Natural killer cell (primary cell): ENCODE measurements at regions of chr11 and their contacts with region 1.

Region 1: DNA sequence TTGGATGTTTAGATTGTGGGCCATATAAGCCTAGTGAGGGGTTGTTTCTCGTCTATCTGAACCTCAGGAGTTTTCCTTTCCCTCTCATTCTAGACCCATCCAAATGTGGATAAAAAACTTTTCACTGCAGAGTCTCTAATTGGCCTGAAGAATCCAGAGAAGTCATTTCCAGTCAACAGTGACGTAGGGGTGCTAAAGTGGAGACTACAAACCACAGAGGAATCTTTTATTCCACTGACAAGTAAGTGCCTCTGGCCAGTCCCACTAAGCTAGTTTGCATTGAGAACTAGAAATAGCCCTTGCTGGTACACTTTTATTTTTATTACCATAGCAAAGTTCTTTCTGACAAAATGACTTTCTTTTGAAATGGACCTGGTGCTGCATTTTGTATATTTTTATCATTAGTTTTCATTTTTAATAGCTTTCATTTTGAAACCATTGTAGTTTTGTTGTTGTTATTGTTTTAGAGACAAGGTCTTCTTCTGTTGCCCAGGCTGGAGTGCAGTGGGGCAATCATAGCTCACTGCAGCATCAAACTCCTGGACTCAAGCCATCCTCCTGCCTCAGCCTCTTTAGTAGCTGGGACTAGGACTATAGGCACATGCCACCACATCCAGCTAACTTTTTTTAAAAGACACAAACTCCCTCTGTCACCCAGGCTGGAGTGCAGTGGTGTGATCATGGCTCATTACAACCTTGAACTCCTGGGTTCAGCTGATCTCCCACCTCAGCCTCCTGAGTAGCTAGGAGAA is 14.6 kb upstream of the PHLDB1 start:
- DNase-seq: no peak
- ATAC-seq: no peak
- H3K4me3 ChIP-seq: no peak overlapping the region
- H3K4me3 Mint-ChIP-seq: no peak overlapping the region
- H3K27ac ChIP-seq: no peak overlapping the region
- H3K27ac Mint-ChIP-seq: peak overlapping the region in 1 of 2 donors; percentile 19
- H3K4me1 ChIP-seq: no peaks in the 10 kb centered on the region
- H3K4me1 Mint-ChIP-seq: peaks cover 6 to 7% of the 10 kb centered on the region in 2 donors
- H3K27me3 ChIP-seq: no peaks in the 10 kb centered on the region
- H3K27me3 Mint-ChIP-seq: no peaks in the 10 kb centered on the region
- CTCF ChIP-seq: no peak

Region 2: DNA sequence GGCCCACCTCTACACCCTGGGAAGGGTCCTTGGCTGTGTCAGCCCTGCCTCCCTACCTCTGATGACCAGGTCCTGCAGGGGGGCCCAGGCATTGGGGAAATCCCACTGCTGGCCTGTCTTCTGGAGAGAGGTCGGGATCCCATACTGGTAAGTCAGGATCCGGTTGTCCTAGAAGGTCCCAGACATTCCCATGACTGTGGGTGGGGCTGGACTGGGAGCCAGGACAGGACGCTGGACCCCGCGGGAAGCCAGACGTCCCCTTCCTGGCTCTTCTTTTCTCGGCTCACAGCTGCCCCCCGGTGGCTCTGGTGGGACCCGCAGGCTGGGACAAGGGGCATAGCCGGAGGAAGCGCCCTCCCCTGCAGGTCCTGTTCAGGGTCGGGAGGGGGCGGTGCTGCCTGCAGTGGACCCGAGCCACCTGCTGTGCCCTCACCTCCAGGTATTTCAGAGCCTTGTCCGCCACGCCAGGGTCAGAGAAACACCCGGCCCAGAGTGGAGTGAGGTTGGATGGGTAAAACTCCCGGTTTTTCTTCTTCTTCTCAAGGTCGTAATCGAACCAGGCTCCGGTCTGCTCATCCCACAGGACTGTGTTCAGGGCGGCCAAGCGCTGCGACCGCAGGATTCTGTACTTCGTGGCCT is 66.6 kb after region 1 on chr11:
- intact Hi-C with region 1: loop called (anchors 1 kb)
- DNase-seq: peak; percentile 85 to 90
- ATAC-seq: peak; percentile 93 to 100 (median 100)
- H3K4me3 ChIP-seq: no peak overlapping the region
- H3K4me3 Mint-ChIP-seq: no peak overlapping the region
- H3K27ac ChIP-seq: no peak overlapping the region
- H3K27ac Mint-ChIP-seq: no peak overlapping the region
- H3K4me1 ChIP-seq: peaks cover 8% of the 10 kb centered on the region
- H3K4me1 Mint-ChIP-seq: peaks cover 0 to 7% of the 10 kb centered on the region in 2 donors
- H3K27me3 ChIP-seq: no peaks in the 10 kb centered on the region
- H3K27me3 Mint-ChIP-seq: no peaks in the 10 kb centered on the region
- CTCF ChIP-seq: peak; percentile 97